Left ventricle myocardium superior (tissue), 1 donor: ENCODE measurements at regions of chr2 and their contacts with region 1.

Region 1: GRCh38 chr2:44715671-44716081 is 225.8 kb upstream of the SIX3 start:
- DNase-seq: no peak
- ATAC-seq: peak; percentile 58

Region 2: GRCh38 chr2:44479122-44479887 is 236.4 kb before region 1 on chr2:
- intact Hi-C with region 1: loop called (anchors 10 kb)
- DNase-seq: no peak
- ATAC-seq: peak; percentile 91